GM12878 (cell line): ENCODE measurements at regions of chr20 and their contacts with region 1.

Region 1: GRCh38 chr20:5810800-5811422 is 60.7 kb downstream of the SHLD1 start:
- DNase-seq: no peak
- ATAC-seq: no peak
- H3K4me3 ChIP-seq: no peak overlapping the region
- H3K27ac ChIP-seq: no peak overlapping the region
- H3K4me1 ChIP-seq: no peaks in the 10 kb centered on the region
- H3K27me3 ChIP-seq: no peaks in the 10 kb centered on the region
- CTCF ChIP-seq: no peak
- EP300 ChIP-seq: no peak
- POLR2A ChIP-seq: no peak
- RAD21 ChIP-seq: no peak

Region 2: DNA sequence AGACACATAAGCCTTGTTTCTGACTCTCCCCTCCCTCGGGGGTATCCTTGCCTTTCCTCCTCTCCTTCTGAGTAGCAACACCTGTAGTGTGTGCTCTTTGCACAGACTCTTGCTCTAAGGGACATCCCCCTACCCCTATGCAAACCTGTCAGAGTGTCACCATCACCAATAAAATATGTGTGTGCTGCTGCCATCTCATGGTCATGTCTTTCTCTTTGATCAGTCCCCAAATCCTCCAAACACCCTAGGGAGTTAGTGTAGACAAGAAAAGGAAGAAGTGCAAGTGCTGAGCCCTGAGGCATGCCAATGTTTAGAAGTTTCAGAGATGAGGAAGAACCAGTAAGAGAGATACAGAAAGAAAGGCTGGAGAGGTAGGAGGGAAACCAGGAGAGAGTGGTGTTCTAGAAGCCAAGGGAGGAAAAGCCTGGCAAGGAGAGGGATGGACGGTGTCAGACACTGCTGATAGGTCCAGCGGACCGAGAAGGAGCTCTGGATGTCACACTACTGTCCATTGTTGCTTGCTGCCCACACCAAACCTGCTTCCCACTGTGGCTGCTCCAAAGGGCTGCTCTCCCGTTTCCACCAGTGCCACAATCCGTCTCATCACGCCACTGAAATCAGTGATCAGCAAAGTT is 123.0 kb after region 1 on chr20:
- CTCF ChIA-PET with region 1: interaction called, 3 read pairs
- POLR2A ChIA-PET with region 1: no interaction called
- RAD21 ChIA-PET with region 1: no interaction called
- SMC1A ChIA-PET with region 1: interaction called, 3 read pairs
- in situ Hi-C with region 1: no loop called
- intact Hi-C with region 1: loop called (anchors 10 kb)
- DNase-seq: peak; percentile 26
- ATAC-seq: peak; percentile 94
- H3K4me3 ChIP-seq: no peak overlapping the region
- H3K27ac ChIP-seq: no peak overlapping the region
- H3K4me1 ChIP-seq: no peaks in the 10 kb centered on the region
- H3K27me3 ChIP-seq: 0 out of 4 replicates have a peak, but pooled peaks cover 0 to 1% of the 10 kb centered on the region in 2 experiments
- CTCF ChIP-seq: peak; percentile 35 to 61 (median 43); a peak in 4 of 6 replicates
- EP300 ChIP-seq: no peak
- POLR2A ChIP-seq: no peak
- RAD21 ChIP-seq: peak; percentile 67